ENCODE measurements at regions of chr3 and their contacts with region 1.

Region 1: DNA sequence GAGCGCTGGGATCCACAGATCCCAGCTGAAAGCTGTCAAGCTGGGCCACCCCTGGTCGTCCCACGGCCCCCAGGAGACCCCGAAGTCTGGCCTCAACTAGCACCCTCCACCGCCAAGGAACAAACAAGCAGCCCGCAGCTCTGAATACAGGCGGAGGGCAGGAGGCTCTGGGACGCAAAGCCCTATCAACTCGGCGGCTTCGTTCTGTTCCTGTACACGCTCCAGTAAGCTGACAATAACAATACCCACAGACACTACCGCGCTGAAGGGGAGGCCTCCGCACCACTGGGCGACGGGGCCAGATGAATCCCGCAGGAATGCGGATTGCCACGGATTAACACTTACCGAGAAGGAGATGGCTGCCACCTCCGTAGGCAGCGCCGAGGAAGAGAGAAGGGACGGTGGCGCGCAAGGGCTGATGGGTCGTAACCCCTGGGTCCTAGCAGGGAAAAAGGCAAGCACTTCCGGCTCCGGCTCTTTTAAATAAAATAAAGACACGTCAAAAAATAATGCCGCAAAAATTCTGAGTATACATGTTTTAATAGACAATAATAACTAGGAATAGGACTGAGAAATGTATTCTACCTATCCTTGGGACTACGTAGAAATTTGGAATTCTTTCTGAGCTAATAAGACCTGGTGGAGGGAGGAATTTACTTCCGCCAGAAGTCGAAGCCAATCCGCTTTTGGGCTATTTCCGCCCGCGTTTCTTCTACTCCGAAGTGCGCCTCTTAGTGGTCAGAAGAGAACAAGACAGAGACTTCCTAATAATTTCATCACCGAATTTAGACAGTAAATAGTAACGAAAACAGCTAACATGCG is at the start of gene RPL32:
- DNase-seq: peak; percentile 86
- H3K4me3 Mint-ChIP-seq: peak within 1 kb of the TSS; percentile 97
- H3K27ac Mint-ChIP-seq: peak within 1 kb of the TSS; percentile 96
- H3K4me1 Mint-ChIP-seq: peaks cover 46% of the 10 kb centered on the region
- H3K27me3 Mint-ChIP-seq: peaks cover 2% of the 10 kb centered on the region
- total RNA-seq, gene RPL32: 1,634 to 1,730 TPM

Region 2: GRCh38 chr3:12822725-12823373 is 18.5 kb before region 1 on chr3:
- CTCF ChIA-PET with region 1: interaction called, 11 read pairs
- POLR2A ChIA-PET with region 1: interaction called, 6 read pairs
- DNase-seq: no peak
- H3K4me3 Mint-ChIP-seq: no peak overlapping the region
- H3K27ac Mint-ChIP-seq: no peak overlapping the region
- H3K4me1 Mint-ChIP-seq: no peaks in the 10 kb centered on the region
- H3K27me3 Mint-ChIP-seq: no peaks in the 10 kb centered on the region

Region 3: GRCh38 chr3:12830785-12831156 is 10.6 kb before region 1 on chr3:
- CTCF ChIA-PET with region 1: interaction called, 19 read pairs
- POLR2A ChIA-PET with region 1: interaction called, 17 read pairs
- DNase-seq: no peak
- H3K4me3 Mint-ChIP-seq: no peak overlapping the region
- H3K27ac Mint-ChIP-seq: no peak overlapping the region
- H3K4me1 Mint-ChIP-seq: no peaks in the 10 kb centered on the region
- H3K27me3 Mint-ChIP-seq: no peaks in the 10 kb centered on the region

Region 4: GRCh38 chr3:13012228-13012691 is 170.9 kb after region 1 on chr3:
- CTCF ChIA-PET with region 1: interaction called, 7 read pairs
- POLR2A ChIA-PET with region 1: interaction called, 11 read pairs
- DNase-seq: peak; percentile 69
- H3K4me3 Mint-ChIP-seq: peak overlapping the region; percentile 78
- H3K27ac Mint-ChIP-seq: peak overlapping the region; percentile 100
- H3K4me1 Mint-ChIP-seq: peaks cover 78% of the 10 kb centered on the region
- H3K27me3 Mint-ChIP-seq: no peaks in the 10 kb centered on the region